ENCODE measurements at regions of chr5 and their contacts with region 1.

Region 1: GRCh38 chr5:102815540-102816332 is 60.6 kb downstream of the PAM start:
- DNase-seq: no peak
- ATAC-seq: no peak
- H3K4me3 Mint-ChIP-seq: no peak overlapping the region
- H3K27ac Mint-ChIP-seq: no peak overlapping the region
- H3K4me1 Mint-ChIP-seq: peaks cover 14% of the 10 kb centered on the region
- H3K27me3 Mint-ChIP-seq: no peaks in the 10 kb centered on the region
- CTCF ChIP-seq: no peak

Region 2: GRCh38 chr5:102832445-102832844 is 16.7 kb after region 1 on chr5:
- CTCF ChIA-PET with region 1: no interaction called
- POLR2A ChIA-PET with region 1: no interaction called
- intact Hi-C with region 1: loop called (anchors 2 kb)
- DNase-seq: no peak
- ATAC-seq: no peak
- H3K4me3 Mint-ChIP-seq: no peak overlapping the region
- H3K27ac Mint-ChIP-seq: no peak overlapping the region
- H3K4me1 Mint-ChIP-seq: no peaks in the 10 kb centered on the region
- H3K27me3 Mint-ChIP-seq: peaks cover 2% of the 10 kb centered on the region
- CTCF ChIP-seq: no peak